Gastrocnemius medialis (tissue), 4 donors: ENCODE measurements at regions of chr3 and their contacts with region 1.

Region 1: GRCh38 chr3:149975919-149976318 is 5.2 kb upstream of the PFN2 start:
- DNase-seq: no peak
- ATAC-seq: no peak
- H3K4me3 ChIP-seq: no peak overlapping the region
- H3K27ac ChIP-seq: peak overlapping the region; percentile 5 to 97 (median 62)
- H3K4me1 ChIP-seq: peaks cover 27 to 32% of the 10 kb centered on the region in 2 donors
- H3K27me3 ChIP-seq: no peaks in the 10 kb centered on the region
- CTCF ChIP-seq: no peak
- POLR2A ChIP-seq: no peak

Region 2: DNA sequence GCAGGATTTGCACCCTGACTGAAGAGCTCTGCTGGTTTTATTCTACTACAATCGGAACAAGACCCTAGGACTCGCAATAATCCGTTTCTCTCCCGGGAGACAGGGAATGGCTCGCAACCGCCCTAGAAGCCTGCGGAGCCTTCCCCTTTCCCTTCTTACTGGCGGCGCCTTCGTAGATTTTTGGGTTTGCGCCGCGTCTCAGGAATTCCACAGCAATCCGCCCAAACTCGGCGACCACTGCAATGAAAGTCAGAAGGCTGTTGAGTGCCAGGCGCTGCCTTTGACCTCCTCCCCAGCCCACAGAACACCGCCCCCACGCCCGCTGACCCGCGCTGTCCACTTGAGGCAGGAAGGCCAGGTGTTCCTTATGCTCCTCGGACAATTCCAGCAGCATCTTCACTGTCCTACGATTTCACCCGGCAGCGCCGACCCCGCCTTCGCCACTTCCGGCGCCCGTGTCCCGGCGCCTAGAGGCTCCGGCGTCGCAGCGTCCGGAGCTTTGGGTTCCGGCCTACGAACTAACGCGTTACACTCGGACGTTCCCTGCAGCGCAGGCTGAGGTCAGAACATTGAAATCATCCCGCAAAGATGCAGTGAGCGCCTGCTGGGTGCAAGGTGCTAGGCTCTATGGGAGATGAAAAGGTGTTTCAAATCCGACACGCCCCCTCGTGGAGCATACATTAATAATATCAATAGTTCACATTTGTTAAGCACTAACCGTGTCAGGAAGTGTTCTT is 223.7 kb before region 1 on chr3 and contains the start of gene COMMD2:
- in situ Hi-C with region 1: no loop called
- intact Hi-C with region 1: no loop called
- DNase-seq: peak; percentile 30 to 65
- ATAC-seq: peak; percentile 94 to 98
- H3K4me3 ChIP-seq: peak within 1 kb of the TSS; percentile 90 to 98 (median 92)
- H3K27ac ChIP-seq: peak within 1 kb of the TSS; percentile 80 to 88 (median 84)
- H3K4me1 ChIP-seq: peaks cover 7 to 9% of the 10 kb centered on the region in 2 donors
- H3K27me3 ChIP-seq: no peaks in the 10 kb centered on the region
- CTCF ChIP-seq: peak; percentile 22 to 42 (median 35)
- POLR2A ChIP-seq: peak in 1 of 2 donors; percentile 49
- total RNA-seq, gene COMMD2: 7.9 to 10.0 (median 8.6) TPM

Region 3: DNA sequence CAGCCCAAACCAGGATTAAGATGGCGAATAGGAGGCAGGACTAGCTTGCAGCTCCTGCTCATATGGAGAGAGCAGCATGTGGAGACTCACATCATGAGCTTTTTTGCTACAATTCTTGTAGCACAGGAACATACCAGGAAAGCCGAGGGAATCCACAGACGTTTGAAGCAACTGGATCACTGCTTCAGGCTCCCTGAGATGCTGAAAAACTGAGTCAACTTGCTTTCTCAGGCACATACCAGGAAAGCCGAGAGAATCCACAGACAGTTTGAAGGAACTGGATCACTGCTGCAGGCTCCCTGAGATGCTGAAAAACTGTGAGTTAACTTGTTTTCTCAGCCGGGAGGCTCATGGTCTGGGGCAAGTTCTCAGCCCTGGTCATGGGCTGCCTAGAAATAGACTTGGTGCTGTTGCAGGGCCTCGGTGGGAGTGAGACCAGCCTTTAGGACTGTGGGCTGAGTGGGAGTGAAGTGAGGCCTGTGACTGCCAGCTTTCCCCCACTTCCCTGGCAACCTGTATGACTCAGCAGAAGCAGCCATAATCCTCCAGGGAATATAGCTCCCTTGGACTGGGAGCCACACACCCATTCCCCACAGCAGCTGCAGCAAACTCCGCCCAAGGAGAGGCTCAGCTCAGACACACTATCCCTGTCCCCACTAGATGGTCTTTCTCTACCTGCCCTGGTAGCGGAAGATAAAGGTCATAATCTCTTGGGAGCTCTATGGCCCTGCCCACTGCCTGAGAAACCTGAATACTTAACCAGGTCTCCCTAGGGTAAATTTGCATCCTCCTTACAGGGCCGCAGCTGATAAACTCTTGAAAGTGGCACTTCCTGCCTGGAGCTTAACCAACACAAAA is 46.7 kb after region 1 on chr3:
- in situ Hi-C with region 1: loop called in 1 of 4 experiments (anchors 5 kb)
- intact Hi-C with region 1: no loop called
- DNase-seq: no peak
- ATAC-seq: no peak
- H3K4me3 ChIP-seq: no peak overlapping the region
- H3K27ac ChIP-seq: no peak overlapping the region
- H3K4me1 ChIP-seq: no peaks in the 10 kb centered on the region
- H3K27me3 ChIP-seq: no peaks in the 10 kb centered on the region
- CTCF ChIP-seq: no peak
- POLR2A ChIP-seq: no peak

Region 4: DNA sequence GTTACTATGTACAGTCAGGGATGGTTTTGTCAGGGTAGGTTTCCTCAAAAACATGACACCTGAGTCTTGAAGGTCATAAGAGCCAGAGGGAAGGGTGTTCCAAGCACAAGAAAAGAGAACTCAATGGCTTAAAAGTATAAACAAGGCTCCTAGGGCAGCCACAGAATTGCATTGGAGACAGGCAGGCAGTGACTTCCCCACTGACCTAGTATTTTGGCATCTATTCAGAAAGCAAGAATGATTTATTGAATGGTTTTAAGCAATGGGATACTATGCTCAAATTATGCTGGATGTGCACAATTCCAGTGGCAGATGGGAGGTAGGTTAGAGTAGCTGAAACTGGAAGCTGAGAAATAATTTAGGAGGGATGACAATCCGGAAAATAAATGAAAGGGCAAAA is 486.2 kb after region 1 on chr3:
- in situ Hi-C with region 1: no loop called
- intact Hi-C with region 1: no loop called
- DNase-seq: no peak
- ATAC-seq: peak in 1 of 2 donors; percentile 61
- H3K4me3 ChIP-seq: no peak overlapping the region
- H3K27ac ChIP-seq: no peak overlapping the region
- H3K4me1 ChIP-seq: no peaks in the 10 kb centered on the region
- H3K27me3 ChIP-seq: no peaks in the 10 kb centered on the region
- CTCF ChIP-seq: no peak
- POLR2A ChIP-seq: no peak